OCI-LY7 (cell line): ENCODE measurements at regions of chrX and their contacts with region 1.

Region 1: GRCh38 chrX:154478728-154479622 is at the start of gene LAGE3:
- DNase-seq: peak; percentile 92
- H3K4me3 ChIP-seq: peak within 1 kb of the TSS; percentile 80
- H3K27ac ChIP-seq: peak within 1 kb of the TSS; percentile 83
- H3K4me1 ChIP-seq: peaks cover 52% of the 10 kb centered on the region
- CTCF ChIP-seq: no peak
- total RNA-seq, gene LAGE3: 53.2 and 70.1 TPM in 2 replicates

Region 2: GRCh38 chrX:153917861-153918260 is 561.1 kb before region 1 on chrX:
- CTCF ChIA-PET with region 1: no interaction called
- POLR2A ChIA-PET with region 1: no interaction called
- intact Hi-C with region 1: no loop called
- DNase-seq: no peak
- H3K4me3 ChIP-seq: no peak overlapping the region
- H3K27ac ChIP-seq: no peak overlapping the region
- H3K4me1 ChIP-seq: no peaks in the 10 kb centered on the region
- CTCF ChIP-seq: no peak

Region 3: DNA sequence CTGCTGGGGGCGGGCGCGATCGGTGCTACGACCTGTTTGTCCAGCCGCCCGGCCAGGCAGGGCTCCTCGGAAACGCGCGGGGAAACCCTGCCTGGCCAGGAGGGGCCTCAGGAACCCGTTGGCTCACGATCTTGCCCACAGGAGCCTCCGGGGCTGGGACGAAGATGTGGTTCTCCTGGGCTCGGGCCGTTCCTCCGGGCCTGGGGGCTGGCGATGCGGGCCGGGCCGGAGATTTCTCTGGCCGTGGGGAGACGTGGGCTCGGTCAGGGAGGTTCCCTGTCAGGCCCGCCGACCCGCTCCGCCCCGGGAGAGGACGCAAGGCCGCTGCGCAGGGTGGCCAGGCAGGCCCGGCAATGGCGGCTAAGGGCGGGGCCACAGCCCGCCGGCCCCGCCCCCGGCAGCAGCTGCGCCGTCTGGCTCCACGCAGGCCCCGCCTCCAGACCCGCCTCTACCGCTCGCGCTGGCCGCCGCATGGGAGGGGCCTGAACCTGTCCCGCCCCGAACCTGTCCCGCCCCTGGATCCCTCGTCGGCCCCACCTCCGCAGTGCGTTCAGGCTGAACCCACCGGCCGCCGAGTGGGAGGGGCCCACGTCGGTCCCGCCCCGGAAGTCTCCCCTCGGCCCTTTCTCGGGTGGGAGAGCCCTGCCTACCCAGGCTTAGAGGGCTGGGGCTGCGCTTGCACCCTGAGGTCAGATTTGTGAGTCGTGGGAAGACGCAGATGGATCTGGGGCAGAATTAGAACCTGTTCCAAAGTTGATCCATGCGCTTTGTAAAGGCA is 37.1 kb after region 1 on chrX and contains the start of gene FAM3A:
- CTCF ChIA-PET with region 1: no interaction called
- POLR2A ChIA-PET with region 1: no interaction called
- intact Hi-C with region 1: loop called (anchors 5 kb)
- DNase-seq: peak; percentile 89
- H3K4me3 ChIP-seq: peak within 1 kb of the TSS; percentile 91
- H3K27ac ChIP-seq: no peak within 1 kb of the TSS
- H3K4me1 ChIP-seq: peaks cover 13% of the 10 kb centered on the region
- CTCF ChIP-seq: no peak
- total RNA-seq, gene FAM3A: 15.3 and 16.4 TPM in 2 replicates

Region 4: GRCh38 chrX:154526901-154527675 is 48.1 kb after region 1 on chrX:
- CTCF ChIA-PET with region 1: no interaction called
- POLR2A ChIA-PET with region 1: no interaction called
- intact Hi-C with region 1: no loop called
- DNase-seq: peak; percentile 80
- H3K4me3 ChIP-seq: peak overlapping the region; percentile 62
- H3K27ac ChIP-seq: peak overlapping the region; percentile 66
- H3K4me1 ChIP-seq: peaks cover 12% of the 10 kb centered on the region
- CTCF ChIP-seq: peak; percentile 64